Head of caudate nucleus (tissue), 42 donors: ENCODE measurements at regions of chr19 and their contacts with region 1.

Region 1: DNA sequence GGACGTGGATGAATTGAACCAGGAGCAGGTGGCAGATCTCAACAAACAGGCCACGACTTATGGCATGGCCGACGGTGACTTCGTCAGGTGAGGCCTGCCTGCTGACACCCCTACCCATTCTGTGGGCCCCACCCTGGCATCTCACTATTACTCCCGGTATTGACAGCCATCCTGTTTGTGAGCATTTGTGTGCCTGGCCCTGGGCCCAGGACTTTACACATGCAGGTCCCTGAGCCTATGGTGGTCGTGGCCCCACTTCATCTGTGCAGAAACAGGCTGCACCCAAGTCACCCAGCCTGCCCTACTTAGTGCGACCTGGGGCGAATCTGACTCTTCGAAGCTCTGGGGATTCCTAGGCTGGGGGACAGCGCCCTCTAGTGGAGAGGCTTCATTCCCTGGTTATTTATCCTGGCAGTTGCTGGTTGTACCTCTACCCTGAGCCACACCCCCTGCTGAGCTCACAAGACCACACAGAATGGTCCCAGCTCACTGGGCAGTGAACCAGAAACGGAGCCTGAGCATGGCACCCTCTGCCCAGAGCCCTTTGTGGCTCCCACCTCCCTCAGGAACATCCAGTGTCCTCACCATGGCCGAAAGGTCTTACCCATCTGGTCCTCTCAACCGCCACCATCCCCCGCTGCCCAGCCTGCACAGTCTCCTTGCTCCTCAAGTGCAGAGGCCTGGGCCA is 16.9 kb downstream of the ZNF296 start:
- DNase-seq: peak; percentile 42 to 95 (median 87)

Region 2: GRCh38 chr19:44903602-44904425 is 155.6 kb before region 1 on chr19:
- intact Hi-C with region 1: loop called (anchors 10 kb)
- DNase-seq: peak; percentile 51 to 94 (median 84)

Region 3: DNA sequence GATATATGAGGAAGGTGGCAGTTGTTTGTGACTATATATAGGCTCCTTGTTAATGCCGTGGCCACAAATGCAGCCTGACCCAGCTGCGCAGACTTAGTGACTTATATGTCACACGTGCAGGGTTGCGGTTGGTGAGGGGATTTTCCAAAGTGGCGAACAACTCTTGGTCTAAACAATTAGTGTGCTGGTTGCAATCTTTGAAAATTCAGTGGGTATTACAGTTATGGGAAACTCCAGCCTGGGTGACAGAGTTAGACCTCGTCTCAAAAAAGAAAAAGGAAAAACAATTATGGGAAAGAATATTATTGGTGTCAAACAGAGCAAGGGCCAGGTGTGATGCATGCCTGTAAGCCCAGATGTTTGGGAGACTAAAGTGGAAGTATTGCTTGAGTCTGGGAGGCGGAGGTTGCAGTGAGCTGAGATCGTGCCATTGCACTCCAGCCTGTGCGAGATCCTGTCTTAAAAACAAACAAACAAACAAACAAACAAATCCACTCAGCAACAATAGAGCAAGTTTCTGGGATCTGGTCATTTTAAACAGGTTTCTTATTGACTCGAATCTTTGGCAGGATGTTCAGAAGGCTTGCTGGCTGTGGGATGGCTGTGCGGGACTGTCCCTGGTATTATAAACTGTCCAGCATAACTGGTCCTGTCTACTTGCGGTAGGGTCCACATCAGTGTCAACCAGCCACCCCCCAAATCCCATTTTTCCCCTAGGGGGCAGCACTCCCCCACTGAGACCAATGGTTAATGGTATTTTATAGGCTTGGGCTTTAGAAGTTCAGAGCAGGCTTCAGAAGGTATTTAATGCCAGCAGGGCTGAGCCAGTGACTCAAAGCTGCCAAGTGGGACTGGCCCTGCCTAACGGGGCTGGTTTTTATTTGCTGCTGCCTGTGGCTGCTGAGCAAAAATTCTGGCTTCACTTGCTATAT is 42.8 kb before region 1 on chr19:
- intact Hi-C with region 1: loop called (anchors 5 kb)
- DNase-seq: peak in 41 of 42 donors; percentile 52 to 94 (median 82)

Region 4: DNA sequence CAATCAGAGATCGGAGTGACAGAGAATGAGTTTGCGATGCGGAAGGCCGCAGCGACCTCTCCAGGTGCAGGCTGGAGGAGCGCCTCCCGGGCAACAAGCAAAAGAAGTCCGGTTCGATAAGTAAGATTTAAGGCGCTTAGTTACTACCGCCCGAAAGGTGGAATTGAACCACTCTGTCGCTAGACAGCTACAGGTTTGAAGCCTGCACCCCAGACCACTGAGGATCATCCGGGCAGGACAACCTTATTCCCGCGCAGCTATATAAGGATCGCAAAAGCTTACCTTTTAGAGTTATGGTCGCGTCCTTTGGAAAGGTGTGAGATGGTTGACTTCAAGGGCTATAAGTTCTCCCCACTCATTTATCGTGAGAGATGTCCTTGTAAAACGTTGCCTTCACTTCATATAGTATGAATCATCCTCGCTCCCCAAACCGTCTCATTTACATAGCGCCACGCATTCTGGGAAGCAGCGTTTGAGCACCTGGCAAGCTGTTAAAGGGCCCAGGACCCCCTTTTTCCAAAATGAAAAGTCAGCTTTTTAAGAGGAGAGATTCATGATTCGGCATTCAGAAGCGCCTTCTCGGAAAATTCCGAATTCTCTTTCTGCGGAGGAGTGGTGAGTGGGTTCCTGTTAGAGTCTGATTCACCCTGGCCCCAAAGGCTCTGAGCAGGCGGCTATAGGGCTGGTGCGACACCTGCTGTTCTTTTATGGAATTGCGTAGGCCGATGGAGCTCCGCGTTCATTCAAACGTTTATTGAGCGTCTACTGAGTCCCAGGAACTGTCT is 419.2 kb after region 1 on chr19:
- intact Hi-C with region 1: no loop called
- DNase-seq: peak; percentile 73 to 94 (median 87)